ENCODE measurements at regions of chr1 and their contacts with region 1.

Region 1: GRCh38 chr1:33127001-33127791 is 46.2 kb downstream of the AZIN2 start:
- DNase-seq: peak; percentile 100
- ATAC-seq: peak; percentile 98
- H3K4me3 Mint-ChIP-seq: peak overlapping the region; percentile 95
- H3K27ac Mint-ChIP-seq: peak overlapping the region; percentile 96
- H3K4me1 Mint-ChIP-seq: peaks cover 49% of the 10 kb centered on the region
- H3K27me3 Mint-ChIP-seq: no peaks in the 10 kb centered on the region

Region 2: DNA sequence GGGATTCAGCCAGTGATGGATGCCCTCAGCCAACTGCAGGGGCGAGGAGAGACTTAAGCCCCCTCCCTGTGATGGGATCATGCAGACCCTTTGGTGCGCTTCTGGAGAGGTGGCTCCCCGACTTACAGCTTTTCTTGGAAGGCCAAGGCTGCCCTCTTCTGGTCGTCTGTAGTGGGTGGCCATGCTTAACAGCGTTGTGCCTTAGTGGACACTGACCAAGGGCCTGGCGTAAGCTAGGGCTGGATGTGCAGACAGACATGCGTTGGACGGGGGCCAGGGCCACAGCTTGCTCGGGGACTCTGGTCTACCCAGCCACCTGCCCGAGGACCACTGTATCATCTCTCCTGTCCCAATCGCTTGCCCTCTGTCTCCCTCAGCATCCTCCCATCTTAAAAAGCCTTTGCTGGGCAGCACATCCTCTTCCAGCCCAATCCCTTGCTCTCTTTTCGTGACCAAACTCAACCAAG is 40.8 kb before region 1 on chr1:
- CTCF ChIA-PET with region 1: interaction called, 18 read pairs
- POLR2A ChIA-PET with region 1: interaction called, 14 read pairs
- DNase-seq: peak; percentile 55
- ATAC-seq: no peak
- H3K4me3 Mint-ChIP-seq: no peak overlapping the region
- H3K27ac Mint-ChIP-seq: no peak overlapping the region
- H3K4me1 Mint-ChIP-seq: peaks cover 66% of the 10 kb centered on the region
- H3K27me3 Mint-ChIP-seq: peaks cover 7% of the 10 kb centered on the region

Region 3: DNA sequence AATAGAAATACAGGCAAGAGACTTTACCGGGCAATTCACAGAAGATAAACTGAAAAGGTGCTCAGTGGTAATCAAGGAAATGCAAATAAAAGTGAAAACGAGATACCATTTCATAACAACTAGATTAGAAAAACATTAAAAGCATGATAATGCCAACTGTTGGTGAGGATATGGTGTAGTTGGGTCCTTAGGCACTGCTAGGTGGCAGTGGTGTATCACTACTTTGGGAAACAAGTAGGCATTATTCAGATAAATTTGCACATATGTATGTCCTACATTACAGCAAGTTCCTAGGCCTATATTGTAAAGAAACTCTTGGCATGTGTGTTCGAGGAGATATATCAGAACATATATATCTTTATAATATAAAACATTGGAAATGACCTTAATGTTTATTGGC is 15.2 kb before region 1 on chr1:
- CTCF ChIA-PET with region 1: interaction called, 20 read pairs
- POLR2A ChIA-PET with region 1: interaction called, 13 read pairs
- DNase-seq: no peak
- ATAC-seq: peak; percentile 55
- H3K4me3 Mint-ChIP-seq: no peak overlapping the region
- H3K27ac Mint-ChIP-seq: peak overlapping the region; percentile 5
- H3K4me1 Mint-ChIP-seq: peaks cover 14% of the 10 kb centered on the region
- H3K27me3 Mint-ChIP-seq: no peaks in the 10 kb centered on the region

Region 4: GRCh38 chr1:33146003-33146402 is 18.8 kb after region 1 on chr1:
- CTCF ChIA-PET with region 1: interaction called, 11 read pairs
- POLR2A ChIA-PET with region 1: interaction called, 8 read pairs
- DNase-seq: no peak
- ATAC-seq: no peak
- H3K4me3 Mint-ChIP-seq: no peak overlapping the region
- H3K27ac Mint-ChIP-seq: no peak overlapping the region
- H3K4me1 Mint-ChIP-seq: peaks cover 5% of the 10 kb centered on the region
- H3K27me3 Mint-ChIP-seq: no peaks in the 10 kb centered on the region

Region 5: GRCh38 chr1:33367485-33368405 is 240.5 kb after region 1 on chr1:
- CTCF ChIA-PET with region 1: no interaction called
- POLR2A ChIA-PET with region 1: no interaction called
- DNase-seq: peak; percentile 89
- ATAC-seq: peak; percentile 97
- H3K4me3 Mint-ChIP-seq: no peak overlapping the region
- H3K27ac Mint-ChIP-seq: no peak overlapping the region
- H3K4me1 Mint-ChIP-seq: peaks cover 5% of the 10 kb centered on the region
- H3K27me3 Mint-ChIP-seq: peaks cover 2% of the 10 kb centered on the region

Region 6: GRCh38 chr1:33472349-33472980 is 345.3 kb after region 1 on chr1 and contains the start of gene ZSCAN20:
- CTCF ChIA-PET with region 1: interaction called, 10 read pairs
- POLR2A ChIA-PET with region 1: no interaction called
- DNase-seq: peak; percentile 91
- ATAC-seq: peak; percentile 98
- H3K4me3 Mint-ChIP-seq: peak within 1 kb of the TSS; percentile 82
- H3K27ac Mint-ChIP-seq: peak within 1 kb of the TSS; percentile 60
- H3K4me1 Mint-ChIP-seq: peaks cover 43% of the 10 kb centered on the region
- H3K27me3 Mint-ChIP-seq: no peaks in the 10 kb centered on the region
- total RNA-seq, gene ZSCAN20: 1.8 to 2.1 TPM

Measured in activated CD8-positive, alpha-beta T cell treated with anti-CD3 and anti-CD28 coated beads, Interleukin-2, amount 10 ng/mL, durations not matched to agents 7 days and 5 days (primary cell).